BJ (cell line): ENCODE measurements at regions of chr19 and their contacts with region 1.

Region 1: GRCh38 chr19:48123907-48124651 is 13.5 kb upstream of the PLA2G4C start:
- DNase-seq: peak; percentile 38
- H3K4me3 ChIP-seq: no peak overlapping the region
- H3K27me3 ChIP-seq: no peaks in the 10 kb centered on the region
- CTCF ChIP-seq: peak; percentile 40

Region 2: DNA sequence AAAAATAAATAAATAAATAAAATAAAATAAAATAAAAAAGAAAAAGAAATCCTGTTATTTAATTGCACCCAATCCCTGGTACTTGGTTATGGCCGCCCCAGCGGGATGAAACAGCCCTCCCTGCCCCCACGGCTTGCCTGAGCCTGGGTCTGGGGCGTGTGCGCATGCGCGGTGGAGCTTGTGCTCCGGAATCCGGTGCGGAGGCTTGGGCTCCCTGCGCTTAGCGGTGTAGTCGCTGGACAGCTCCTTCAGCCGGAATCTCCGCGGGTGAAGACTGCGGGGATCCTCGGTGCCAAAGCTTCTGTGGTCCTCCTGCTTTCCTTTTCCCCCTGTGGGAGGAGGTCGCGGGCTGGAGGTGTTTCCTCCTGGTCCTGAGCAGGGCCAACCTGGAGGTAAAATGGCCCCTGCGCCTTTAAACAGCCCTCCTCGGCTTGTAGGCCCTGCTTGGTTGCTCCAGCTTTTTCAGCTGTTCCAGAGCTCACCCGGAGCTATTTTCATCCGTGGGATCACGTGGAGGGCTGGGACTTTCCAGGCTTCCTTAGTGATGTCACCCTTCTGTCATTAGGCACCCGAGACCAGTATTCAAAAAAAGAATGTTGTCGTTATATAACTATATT is 13.6 kb before region 1 on chr19 and contains the start of gene PLA2G4C:
- CTCF ChIA-PET with region 1: interaction called, 18 read pairs
- POLR2A ChIA-PET with region 1: no interaction called
- DNase-seq: peak; percentile 71
- H3K4me3 ChIP-seq: peak within 1 kb of the TSS; percentile 48
- H3K27me3 ChIP-seq: no peaks in the 10 kb centered on the region
- CTCF ChIP-seq: no peak
- polyA plus RNA-seq, gene PLA2G4C: 7.2 and 11.3 TPM in 2 replicates

Region 3: GRCh38 chr19:48255376-48256303 is 131.6 kb after region 1 on chr19 and contains the start of gene CARD8:
- CTCF ChIA-PET with region 1: interaction called, 10 read pairs
- POLR2A ChIA-PET with region 1: no interaction called
- DNase-seq: peak; percentile 47
- H3K4me3 ChIP-seq: peak within 1 kb of the TSS; percentile 66
- H3K27me3 ChIP-seq: no peaks in the 10 kb centered on the region
- CTCF ChIP-seq: no peak
- polyA plus RNA-seq, gene CARD8: 15.0 and 16.1 TPM in 2 replicates